Colonic mucosa (tissue), 4 donors: ENCODE measurements at regions of chr15 and their contacts with region 1.

Region 1: GRCh38 chr15:57561041-57561711 is 30.5 kb upstream of the MYZAP start:
- DNase-seq: peak; percentile 87
- H3K4me3 ChIP-seq: no peak overlapping the region
- H3K27ac ChIP-seq: no peak overlapping the region
- H3K4me1 ChIP-seq: peaks cover 4% of the 10 kb centered on the region
- H3K27me3 ChIP-seq: no peaks in the 10 kb centered on the region
- CTCF ChIP-seq: peak; percentile 90

Region 2: GRCh38 chr15:57611938-57612337 is 50.8 kb after region 1 on chr15:
- intact Hi-C with region 1: loop called (anchors 2 kb)
- DNase-seq: peak; percentile 67
- H3K4me3 ChIP-seq: no peak overlapping the region
- H3K27ac ChIP-seq: peak overlapping the region; percentile 73
- H3K4me1 ChIP-seq: peaks cover 22% of the 10 kb centered on the region
- H3K27me3 ChIP-seq: no peaks in the 10 kb centered on the region
- CTCF ChIP-seq: peak; percentile 25

Region 3: DNA sequence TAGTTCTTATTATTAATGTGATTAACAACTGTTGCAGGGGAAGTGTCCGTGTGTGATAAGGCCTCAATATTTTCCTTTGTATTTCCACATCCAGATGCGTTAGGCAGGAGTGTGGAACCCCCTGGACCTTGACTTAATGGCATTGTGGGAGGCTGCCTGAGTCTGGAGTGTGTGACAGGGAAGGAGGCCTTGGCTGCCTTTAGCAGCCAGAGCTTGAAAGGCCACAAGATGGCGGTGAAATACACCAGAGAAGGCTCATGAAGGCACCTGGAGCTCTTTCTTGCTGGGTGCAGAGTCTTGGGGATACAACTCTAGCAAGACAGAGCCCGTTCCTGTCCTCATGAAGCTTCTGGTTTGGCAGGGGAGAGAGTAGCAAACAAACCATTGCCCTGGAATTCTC is 182.2 kb after region 1 on chr15:
- intact Hi-C with region 1: loop called (anchors 10 kb)
- DNase-seq: no peak
- H3K4me3 ChIP-seq: no peak overlapping the region
- H3K27ac ChIP-seq: no peak overlapping the region
- H3K4me1 ChIP-seq: no peaks in the 10 kb centered on the region
- H3K27me3 ChIP-seq: no peaks in the 10 kb centered on the region
- CTCF ChIP-seq: no peak

Region 4: DNA sequence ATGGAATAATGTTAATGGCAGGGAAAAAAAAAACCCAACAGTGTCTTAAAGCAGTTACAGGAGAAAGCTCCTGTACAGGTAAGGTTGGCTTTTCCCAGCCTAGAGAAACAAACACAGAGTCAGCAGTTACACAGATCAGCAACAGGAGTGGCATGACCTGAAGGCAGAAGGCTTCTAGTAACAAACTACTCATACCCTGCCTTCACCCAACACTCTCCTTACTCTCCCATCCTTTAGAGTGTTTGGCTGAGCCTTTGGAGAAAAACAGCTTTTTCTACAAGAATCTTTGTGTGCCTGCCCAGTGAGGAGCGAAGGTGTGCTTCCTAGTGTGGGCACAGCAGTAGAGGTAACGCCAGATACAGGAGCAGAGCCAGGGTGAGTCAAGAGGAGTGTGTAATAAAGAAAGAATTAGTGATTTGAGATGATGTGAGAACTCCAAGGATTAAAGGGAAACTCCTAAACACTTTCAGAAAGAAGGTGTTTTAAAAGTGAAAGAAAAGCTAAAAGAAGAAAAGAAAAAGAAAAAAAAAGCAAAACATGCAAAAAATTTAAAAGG is 298.0 kb after region 1 on chr15:
- intact Hi-C with region 1: loop called (anchors 5 kb)
- DNase-seq: no peak
- H3K4me3 ChIP-seq: no peak overlapping the region
- H3K27ac ChIP-seq: no peak overlapping the region
- H3K4me1 ChIP-seq: no peaks in the 10 kb centered on the region
- H3K27me3 ChIP-seq: no peaks in the 10 kb centered on the region
- CTCF ChIP-seq: no peak